Activated CD4-positive, alpha-beta T cell treated with anti-CD3 and anti-CD28 coated beads for 36 hours (primary cell): ENCODE measurements at regions of chr6 and their contacts with region 1.

Region 1: GRCh38 chr6:33323623-33323948 is 6.0 kb upstream of the ZBTB22 start:
- DNase-seq: no peak
- ATAC-seq: no peak
- H3K4me3 Mint-ChIP-seq: peak overlapping the region; percentile 99
- H3K27ac Mint-ChIP-seq: peak overlapping the region; percentile 99
- H3K4me1 Mint-ChIP-seq: peaks cover 46% of the 10 kb centered on the region
- H3K27me3 Mint-ChIP-seq: no peaks in the 10 kb centered on the region

Region 2: DNA sequence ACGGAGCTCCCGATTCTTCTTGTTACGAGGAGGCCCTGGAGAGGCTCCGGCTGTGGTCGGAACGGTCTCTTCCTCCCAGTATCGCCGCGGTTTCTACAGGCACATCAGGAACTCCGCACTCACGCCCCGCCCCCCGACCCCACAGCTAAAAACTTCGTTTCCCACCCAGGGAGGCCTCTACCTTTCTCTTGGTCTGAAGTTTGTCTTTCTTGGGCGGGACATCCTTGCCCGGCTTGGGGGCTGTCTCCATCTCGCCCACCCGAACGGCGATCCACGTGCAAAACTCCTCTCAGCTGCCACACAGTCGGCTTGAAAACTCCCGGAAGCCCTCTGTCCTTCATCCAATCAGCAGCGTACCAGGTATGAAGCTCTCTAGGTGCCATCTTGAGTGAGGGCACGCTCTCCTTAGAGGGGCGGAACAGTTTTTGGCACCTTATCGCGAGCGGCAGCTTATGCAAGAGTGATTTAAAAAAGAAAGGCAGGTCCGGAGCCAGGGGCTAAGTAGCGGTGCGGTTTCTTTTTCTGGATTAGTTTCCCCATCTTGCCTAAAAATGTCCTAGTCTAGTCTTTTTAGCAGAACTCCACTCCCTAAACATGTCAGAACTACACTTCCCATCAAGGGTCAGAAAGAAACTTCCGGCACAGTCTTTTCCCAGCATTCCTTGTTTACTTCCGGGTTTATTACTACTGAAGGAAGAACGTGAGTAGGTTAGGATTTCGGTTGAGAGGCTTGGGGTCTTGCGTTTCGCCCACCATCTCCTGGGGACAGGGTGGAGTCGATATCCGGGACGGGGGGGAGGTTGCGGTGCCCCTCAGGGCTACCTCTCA is 34.5 kb before region 1 on chr6 and contains the starts of genes PFDN6 and WDR46:
- CTCF ChIA-PET with region 1: no interaction called
- POLR2A ChIA-PET with region 1: no interaction called
- intact Hi-C with region 1: loop called (anchors 1 kb)
- DNase-seq: peak; percentile 87
- ATAC-seq: peak; percentile 98
- H3K4me3 Mint-ChIP-seq: peak within 1 kb of the TSS; percentile 98
- H3K27ac Mint-ChIP-seq: peak within 1 kb of the TSS; percentile 97
- H3K4me1 Mint-ChIP-seq: peaks cover 37% of the 10 kb centered on the region
- H3K27me3 Mint-ChIP-seq: no peaks in the 10 kb centered on the region
- total RNA-seq, gene PFDN6: 65.4 to 96.9 TPM
- total RNA-seq, gene WDR46: 63.5 to 69.4 TPM

Region 3: DNA sequence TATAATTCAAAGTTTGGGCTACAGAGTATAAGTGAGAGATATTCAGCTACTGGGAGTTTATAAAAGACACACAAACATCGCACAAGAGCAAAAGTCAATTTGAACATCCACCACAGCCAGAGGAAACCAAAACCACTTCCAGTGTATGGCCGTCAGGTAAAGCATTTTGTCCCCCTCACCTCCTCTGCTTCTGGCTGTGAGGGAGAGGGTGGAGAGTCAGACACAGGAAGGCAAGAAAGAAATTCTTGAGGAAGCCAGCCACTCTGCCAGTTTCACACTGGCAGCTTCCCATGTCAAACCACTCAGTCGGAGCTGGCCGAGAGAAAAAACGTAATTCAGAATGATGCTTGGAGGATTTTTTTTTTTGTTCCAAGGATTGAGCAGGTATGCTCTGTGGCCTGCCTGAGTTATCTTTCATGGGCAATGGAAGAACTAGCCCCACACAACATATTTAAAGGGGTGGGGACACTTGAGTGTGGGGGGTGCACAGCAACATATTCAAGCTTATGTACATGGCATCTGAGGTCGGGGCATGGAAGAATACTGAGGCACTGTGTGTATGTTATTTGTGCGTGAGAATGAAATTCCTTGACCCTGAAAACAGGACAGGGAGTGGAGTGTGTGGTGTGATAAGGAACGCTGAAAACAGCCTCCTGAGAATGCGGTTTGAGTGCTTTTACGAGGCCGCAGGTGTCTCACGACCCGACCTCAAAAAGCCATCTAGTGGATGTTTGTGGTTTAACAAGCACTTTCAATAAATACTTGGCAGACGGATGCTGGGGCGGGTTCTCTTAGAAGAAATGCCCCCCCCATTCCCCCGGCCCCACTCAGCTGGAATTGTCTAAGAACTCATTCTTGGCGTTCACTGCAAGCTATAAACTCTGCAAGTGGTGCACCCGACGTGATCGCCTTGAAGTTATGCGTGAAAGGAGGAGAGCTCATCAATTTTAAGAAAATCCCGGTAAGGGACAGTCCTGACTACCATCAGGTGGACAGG is 21.4 kb after region 1 on chr6:
- CTCF ChIA-PET with region 1: interaction called, 13 read pairs
- POLR2A ChIA-PET with region 1: interaction called, 6 read pairs
- intact Hi-C with region 1: loop called in 1 of 2 experiments (anchors 1 kb)
- DNase-seq: peak; percentile 79
- ATAC-seq: peak; percentile 54
- H3K4me3 Mint-ChIP-seq: peak overlapping the region; percentile 56
- H3K27ac Mint-ChIP-seq: peak overlapping the region; percentile 78
- H3K4me1 Mint-ChIP-seq: peaks cover 21% of the 10 kb centered on the region
- H3K27me3 Mint-ChIP-seq: no peaks in the 10 kb centered on the region

Region 4: DNA sequence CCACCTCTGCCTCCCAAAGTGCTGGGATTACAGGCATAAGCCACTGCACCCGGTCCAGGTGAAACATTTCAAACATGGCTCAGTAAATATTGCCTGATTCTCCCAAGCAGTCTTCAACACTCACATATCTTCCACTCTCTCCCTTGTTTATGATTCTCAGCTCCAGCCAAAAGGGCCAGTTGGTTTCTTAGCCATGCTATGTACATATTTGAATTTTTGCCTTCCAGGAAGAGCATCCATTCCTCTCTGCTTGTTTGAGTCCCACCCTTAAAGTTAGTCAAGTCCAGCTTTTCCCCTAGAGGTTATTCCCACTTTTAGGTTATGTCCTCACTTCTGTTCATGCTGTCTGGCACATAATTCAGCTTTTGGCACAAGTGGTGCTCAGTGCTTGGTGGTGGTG is 74.0 kb after region 1 on chr6:
- CTCF ChIA-PET with region 1: no interaction called
- POLR2A ChIA-PET with region 1: no interaction called
- intact Hi-C with region 1: no loop called
- DNase-seq: no peak
- ATAC-seq: no peak
- H3K4me3 Mint-ChIP-seq: no peak overlapping the region
- H3K27ac Mint-ChIP-seq: no peak overlapping the region
- H3K4me1 Mint-ChIP-seq: peaks cover 26% of the 10 kb centered on the region
- H3K27me3 Mint-ChIP-seq: no peaks in the 10 kb centered on the region

Region 5: GRCh38 chr6:33417903-33418689 is 94.5 kb after region 1 on chr6 and contains the start of gene CUTA:
- CTCF ChIA-PET with region 1: no interaction called
- POLR2A ChIA-PET with region 1: no interaction called
- intact Hi-C with region 1: loop called in 1 of 2 experiments (anchors 1 kb)
- DNase-seq: peak; percentile 100
- ATAC-seq: peak; percentile 87
- H3K4me3 Mint-ChIP-seq: peak within 1 kb of the TSS; percentile 96
- H3K27ac Mint-ChIP-seq: peak within 1 kb of the TSS; percentile 98
- H3K4me1 Mint-ChIP-seq: peaks cover 54% of the 10 kb centered on the region
- H3K27me3 Mint-ChIP-seq: no peaks in the 10 kb centered on the region
- total RNA-seq, gene CUTA: 154 to 188 TPM

Region 6: DNA sequence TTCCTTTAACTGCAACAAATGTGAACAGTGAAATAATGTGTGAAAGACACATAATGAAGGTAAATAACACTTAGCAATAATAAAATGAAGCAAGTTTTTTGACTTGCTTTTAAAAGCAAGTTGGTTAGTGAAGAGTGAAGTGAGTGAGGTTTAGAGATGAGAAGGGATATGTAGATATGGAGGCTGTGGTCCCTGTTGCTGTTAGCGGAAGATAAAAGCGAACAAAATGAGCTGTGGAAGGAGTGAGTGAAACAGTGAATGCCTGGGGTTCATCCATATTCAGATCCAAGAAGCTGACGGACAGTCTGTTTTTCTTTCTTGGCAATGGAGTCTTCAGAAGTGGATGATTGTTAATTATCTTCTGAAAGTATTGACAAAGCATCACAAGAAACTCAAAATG is 154.3 kb after region 1 on chr6:
- CTCF ChIA-PET with region 1: no interaction called
- POLR2A ChIA-PET with region 1: no interaction called
- intact Hi-C with region 1: no loop called
- DNase-seq: no peak
- ATAC-seq: no peak
- H3K4me3 Mint-ChIP-seq: no peak overlapping the region
- H3K27ac Mint-ChIP-seq: no peak overlapping the region
- H3K4me1 Mint-ChIP-seq: no peaks in the 10 kb centered on the region
- H3K27me3 Mint-ChIP-seq: no peaks in the 10 kb centered on the region

Region 7: DNA sequence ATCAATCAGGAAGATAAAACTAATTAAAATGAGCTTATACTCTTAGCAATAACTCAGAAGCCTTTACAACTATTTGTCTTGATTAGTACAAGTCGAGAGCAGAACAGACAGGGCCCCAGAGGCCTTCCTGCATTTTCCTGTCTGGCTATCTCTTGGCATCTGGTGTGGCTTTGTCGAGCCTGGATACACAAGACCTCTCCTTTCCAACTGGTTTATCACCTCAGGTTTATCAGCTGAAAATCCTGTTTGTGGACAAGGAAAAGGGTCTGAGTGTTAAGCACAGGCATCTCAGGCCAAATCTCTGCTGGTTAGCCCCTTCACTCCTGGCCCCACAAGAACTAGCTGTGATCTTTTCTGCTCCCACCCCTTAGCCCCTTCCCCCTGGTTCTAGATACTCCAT is 223.9 kb after region 1 on chr6:
- CTCF ChIA-PET with region 1: no interaction called
- POLR2A ChIA-PET with region 1: no interaction called
- intact Hi-C with region 1: no loop called
- DNase-seq: no peak
- ATAC-seq: no peak
- H3K4me3 Mint-ChIP-seq: no peak overlapping the region
- H3K27ac Mint-ChIP-seq: no peak overlapping the region
- H3K4me1 Mint-ChIP-seq: peaks cover 20% of the 10 kb centered on the region
- H3K27me3 Mint-ChIP-seq: no peaks in the 10 kb centered on the region